ENCODE measurements at regions of chr5 and their contacts with region 1.

Region 1: GRCh38 chr5:56900858-56901578 is 8.4 kb upstream of the SETD9 start:
- DNase-seq: peak; percentile 46
- H3K4me3 ChIP-seq: no peak overlapping the region
- H3K27ac ChIP-seq: no peak overlapping the region
- H3K4me1 ChIP-seq: no peaks in the 10 kb centered on the region
- H3K27me3 ChIP-seq: no peaks in the 10 kb centered on the region
- CTCF ChIP-seq: peak; percentile 82

Region 2: GRCh38 chr5:56814963-56815658 is 85.9 kb before region 1 on chr5 and contains the start of gene MAP3K1:
- intact Hi-C with region 1: no loop called
- DNase-seq: peak; percentile 85
- H3K4me3 ChIP-seq: peak within 1 kb of the TSS; percentile 92
- H3K27ac ChIP-seq: peak within 1 kb of the TSS; percentile 93
- H3K4me1 ChIP-seq: peaks cover 3% of the 10 kb centered on the region
- H3K27me3 ChIP-seq: no peaks in the 10 kb centered on the region
- CTCF ChIP-seq: no peak
- total RNA-seq, gene MAP3K1: 12.2 to 12.6 TPM

Region 3: DNA sequence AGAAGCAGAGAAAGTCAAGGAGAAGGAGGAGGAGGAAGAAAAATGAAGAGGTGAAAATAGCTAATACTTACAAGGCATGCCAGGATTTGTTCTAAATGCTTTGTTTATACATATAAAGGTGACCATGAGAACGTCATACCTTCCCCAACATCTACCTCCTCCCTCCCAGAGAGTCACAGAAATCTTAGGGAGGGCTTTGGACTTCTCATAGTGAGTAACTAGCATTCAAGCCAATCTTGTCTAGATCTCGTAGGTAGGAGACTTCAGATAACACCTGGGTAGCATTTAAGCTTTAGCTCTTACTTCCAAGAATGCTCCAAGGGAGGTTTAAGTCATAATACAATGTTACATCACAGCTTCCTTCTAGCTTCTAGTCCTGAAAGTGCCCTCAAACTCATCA is 236.4 kb after region 1 on chr5:
- intact Hi-C with region 1: loop called (anchors 2 kb)
- DNase-seq: no peak
- H3K4me3 ChIP-seq: no peak overlapping the region
- H3K27ac ChIP-seq: no peak overlapping the region
- H3K4me1 ChIP-seq: no peaks in the 10 kb centered on the region
- H3K27me3 ChIP-seq: no peaks in the 10 kb centered on the region
- CTCF ChIP-seq: no peak

Region 4: DNA sequence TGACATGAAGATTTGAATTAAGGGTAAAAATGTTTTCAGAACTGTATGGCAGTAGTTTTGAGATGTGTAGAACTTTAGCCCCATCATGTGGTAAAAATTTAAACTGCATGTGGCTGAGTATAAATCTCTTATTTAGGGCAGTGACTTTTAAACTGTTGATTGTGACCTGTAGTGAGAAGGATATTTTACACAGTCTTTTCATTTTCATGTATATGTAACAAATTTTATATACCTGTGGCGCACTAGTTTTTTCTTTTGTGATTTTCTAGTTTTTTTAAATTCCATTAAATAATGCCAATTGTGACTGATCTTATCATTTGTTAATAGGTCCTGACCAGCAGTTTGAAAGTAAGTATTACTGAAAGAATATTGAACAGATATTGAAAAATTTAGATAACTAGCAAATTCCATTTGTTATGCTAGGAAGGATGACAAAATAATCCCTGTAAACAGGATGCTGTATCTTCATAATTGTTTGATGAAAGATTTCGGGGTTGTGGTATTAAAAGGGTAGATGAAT is 320.1 kb after region 1 on chr5:
- intact Hi-C with region 1: loop called (anchors 5 kb)
- DNase-seq: no peak
- H3K4me3 ChIP-seq: no peak overlapping the region
- H3K27ac ChIP-seq: no peak overlapping the region
- H3K4me1 ChIP-seq: no peaks in the 10 kb centered on the region
- H3K27me3 ChIP-seq: no peaks in the 10 kb centered on the region
- CTCF ChIP-seq: peak; percentile 92

Measured in colonic mucosa (tissue), 4 donors.